ENCODE measurements at regions of chr2 and their contacts with region 1.

Region 1: GRCh38 chr2:218708086-218708485 is 2.5 kb upstream of the TTLL4 start:
- DNase-seq: no peak
- H3K4me3 ChIP-seq: no peak overlapping the region
- H3K27ac ChIP-seq: no peak overlapping the region
- H3K4me1 ChIP-seq: peaks cover 10 to 18% (median 14%) of the 10 kb centered on the region in 4 donors
- H3K27me3 ChIP-seq: no peaks in the 10 kb centered on the region
- CTCF ChIP-seq: no peak
- EP300 ChIP-seq: no peak
- POLR2A ChIP-seq: no peak

Region 2: DNA sequence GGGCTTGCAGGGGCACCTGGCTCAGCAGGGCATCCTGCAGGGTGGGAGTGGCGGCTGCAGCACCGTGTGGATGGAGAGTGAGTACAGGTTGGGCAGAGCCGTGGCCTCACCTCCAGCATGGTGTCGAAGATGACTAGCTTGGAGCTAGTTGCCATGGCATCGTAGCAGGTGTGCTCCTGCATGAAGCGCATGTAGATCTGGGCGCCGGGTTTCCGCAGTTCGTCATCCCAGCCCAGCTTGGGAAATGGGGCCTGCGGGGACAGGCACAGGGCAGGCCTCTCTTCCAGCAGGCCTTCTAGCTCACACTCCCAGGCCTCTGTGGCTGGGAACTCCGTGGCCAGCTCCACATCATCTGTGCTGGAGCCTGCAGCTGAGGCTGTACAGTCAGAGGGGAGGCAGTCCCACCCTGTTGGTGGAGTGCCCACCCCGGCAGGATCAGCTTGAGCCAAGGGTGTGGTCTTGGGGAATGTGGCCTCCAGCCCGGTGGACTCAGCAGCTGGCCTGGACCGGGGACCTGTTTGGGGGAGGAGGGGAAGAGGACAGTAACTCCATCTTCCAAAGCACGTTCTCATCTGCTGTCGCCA is 121.9 kb after region 1 on chr2:
- intact Hi-C with region 1: no loop called
- DNase-seq: peak in 1 of 2 donors; percentile 31
- H3K4me3 ChIP-seq: no peak overlapping the region
- H3K27ac ChIP-seq: no peak overlapping the region
- H3K4me1 ChIP-seq: peaks cover 0 to 11% (median 3%) of the 10 kb centered on the region in 4 donors
- H3K27me3 ChIP-seq: peaks cover 0 to 48% (median 0%) of the 10 kb centered on the region in 3 donors
- CTCF ChIP-seq: no peak
- EP300 ChIP-seq: no peak
- POLR2A ChIP-seq: no peak

Region 3: GRCh38 chr2:218852911-218853667 is 145.0 kb after region 1 on chr2:
- intact Hi-C with region 1: loop called (anchors 10 kb)
- DNase-seq: peak; percentile 67 to 81
- H3K4me3 ChIP-seq: no peak overlapping the region
- H3K27ac ChIP-seq: no peak overlapping the region
- H3K4me1 ChIP-seq: peaks cover 0 to 10% (median 4%) of the 10 kb centered on the region in 4 donors
- H3K27me3 ChIP-seq: peaks cover 3 to 99% (median 55%) of the 10 kb centered on the region in 3 donors
- CTCF ChIP-seq: peak in 5 of 7 experiments; percentile 33 to 73 (median 51)
- EP300 ChIP-seq: no peak
- POLR2A ChIP-seq: no peak

Measured in stomach (tissue), 19 donors.